Activated CD4-positive, alpha-beta memory T cell treated with anti-CD3 and anti-CD28 coated beads, Interleukin-2, amount 10 ng/mL, durations not matched to agents 7 days and 5 days (primary cell): ENCODE measurements at regions of chr12 and their contacts with region 1.

Region 1: DNA sequence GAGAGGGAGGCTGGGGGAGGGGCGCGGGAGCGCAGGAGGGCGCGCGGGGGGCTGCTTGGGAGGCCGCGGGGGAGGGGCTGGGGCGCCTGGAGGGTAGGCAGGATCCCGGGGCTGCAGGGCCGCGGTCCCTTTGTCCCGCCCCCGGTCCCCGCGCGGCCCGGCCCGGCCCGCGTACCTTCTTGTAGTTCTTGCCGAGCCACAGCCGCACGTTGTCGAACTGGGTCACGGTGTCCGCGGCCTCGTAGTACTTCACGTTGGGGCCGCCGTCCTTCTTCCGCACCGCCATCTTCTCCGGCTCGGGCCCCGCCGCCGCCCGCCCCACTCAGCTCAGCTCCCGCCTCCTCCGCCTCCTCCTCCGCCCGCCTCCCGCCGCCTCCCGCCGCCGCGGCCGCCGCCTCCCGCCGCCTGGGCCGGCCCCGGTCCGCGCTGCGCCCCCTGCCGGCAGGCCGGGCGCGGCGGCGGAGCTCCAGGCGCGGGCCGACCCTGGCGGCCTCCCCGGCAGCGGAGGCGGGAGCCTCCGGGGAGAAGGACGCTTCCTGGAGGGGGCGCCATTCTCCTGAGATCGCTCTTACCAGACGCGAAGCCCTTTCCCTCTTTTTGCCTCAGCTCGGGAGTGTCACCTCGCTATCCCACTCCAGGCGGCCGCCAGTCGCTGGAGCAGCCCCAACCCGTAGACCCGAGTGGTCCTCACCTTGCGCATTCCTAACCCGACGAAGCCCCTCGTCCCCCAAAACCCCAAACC is at the start of gene SMARCC2:
- DNase-seq: peak; percentile 85
- H3K4me3 Mint-ChIP-seq: peak within 1 kb of the TSS; percentile 97
- H3K27ac Mint-ChIP-seq: peak within 1 kb of the TSS; percentile 94
- H3K4me1 Mint-ChIP-seq: peaks cover 53% of the 10 kb centered on the region
- H3K27me3 Mint-ChIP-seq: no peaks in the 10 kb centered on the region
- total RNA-seq, gene SMARCC2: 133 to 137 TPM

Region 2: GRCh38 chr12:55806982-55807381 is 382.4 kb before region 1 on chr12:
- CTCF ChIA-PET with region 1: no interaction called
- POLR2A ChIA-PET with region 1: no interaction called
- DNase-seq: no peak
- H3K4me3 Mint-ChIP-seq: no peak overlapping the region
- H3K27ac Mint-ChIP-seq: no peak overlapping the region
- H3K4me1 Mint-ChIP-seq: peaks cover 14% of the 10 kb centered on the region
- H3K27me3 Mint-ChIP-seq: no peaks in the 10 kb centered on the region

Region 3: GRCh38 chr12:56104109-56104814 is 85.1 kb before region 1 on chr12 and contains the start of gene PA2G4:
- CTCF ChIA-PET with region 1: interaction called, 9 read pairs
- POLR2A ChIA-PET with region 1: interaction called, 25 read pairs
- DNase-seq: peak; percentile 99
- H3K4me3 Mint-ChIP-seq: peak within 1 kb of the TSS; percentile 99
- H3K27ac Mint-ChIP-seq: peak within 1 kb of the TSS; percentile 98
- H3K4me1 Mint-ChIP-seq: peaks cover 53% of the 10 kb centered on the region
- H3K27me3 Mint-ChIP-seq: no peaks in the 10 kb centered on the region
- total RNA-seq, gene PA2G4: 242 to 243 TPM

Region 4: GRCh38 chr12:56137853-56138571 is 51.3 kb before region 1 on chr12:
- CTCF ChIA-PET with region 1: interaction called, 5 read pairs
- POLR2A ChIA-PET with region 1: interaction called, 11 read pairs
- DNase-seq: no peak
- H3K4me3 Mint-ChIP-seq: no peak overlapping the region
- H3K27ac Mint-ChIP-seq: peak overlapping the region; percentile 78
- H3K4me1 Mint-ChIP-seq: peaks cover 73% of the 10 kb centered on the region
- H3K27me3 Mint-ChIP-seq: no peaks in the 10 kb centered on the region

Region 5: DNA sequence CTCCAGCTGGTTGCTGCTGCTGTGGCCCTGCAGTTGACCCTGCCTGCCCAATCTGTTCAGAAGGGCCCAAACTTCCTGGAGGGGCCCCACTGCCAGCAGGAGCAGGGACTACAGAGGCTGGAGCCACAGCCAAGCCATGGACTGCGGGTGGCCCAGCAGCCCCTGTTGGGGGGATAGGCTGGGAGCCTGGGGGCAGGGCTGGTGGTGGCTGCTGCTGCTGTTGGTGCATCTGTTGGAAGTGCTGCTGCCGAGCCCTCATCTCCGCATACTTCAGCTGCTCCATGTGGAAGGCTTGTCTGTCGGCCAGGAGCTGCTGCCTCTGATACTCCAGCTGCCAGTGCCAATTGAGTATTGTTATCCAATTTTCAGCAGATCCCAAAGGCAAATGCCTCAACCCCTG is 24.0 kb before region 1 on chr12:
- CTCF ChIA-PET with region 1: interaction called, 37 read pairs
- POLR2A ChIA-PET with region 1: interaction called, 95 read pairs
- DNase-seq: no peak
- H3K4me3 Mint-ChIP-seq: no peak overlapping the region
- H3K27ac Mint-ChIP-seq: no peak overlapping the region
- H3K4me1 Mint-ChIP-seq: peaks cover 35% of the 10 kb centered on the region
- H3K27me3 Mint-ChIP-seq: no peaks in the 10 kb centered on the region

Region 6: DNA sequence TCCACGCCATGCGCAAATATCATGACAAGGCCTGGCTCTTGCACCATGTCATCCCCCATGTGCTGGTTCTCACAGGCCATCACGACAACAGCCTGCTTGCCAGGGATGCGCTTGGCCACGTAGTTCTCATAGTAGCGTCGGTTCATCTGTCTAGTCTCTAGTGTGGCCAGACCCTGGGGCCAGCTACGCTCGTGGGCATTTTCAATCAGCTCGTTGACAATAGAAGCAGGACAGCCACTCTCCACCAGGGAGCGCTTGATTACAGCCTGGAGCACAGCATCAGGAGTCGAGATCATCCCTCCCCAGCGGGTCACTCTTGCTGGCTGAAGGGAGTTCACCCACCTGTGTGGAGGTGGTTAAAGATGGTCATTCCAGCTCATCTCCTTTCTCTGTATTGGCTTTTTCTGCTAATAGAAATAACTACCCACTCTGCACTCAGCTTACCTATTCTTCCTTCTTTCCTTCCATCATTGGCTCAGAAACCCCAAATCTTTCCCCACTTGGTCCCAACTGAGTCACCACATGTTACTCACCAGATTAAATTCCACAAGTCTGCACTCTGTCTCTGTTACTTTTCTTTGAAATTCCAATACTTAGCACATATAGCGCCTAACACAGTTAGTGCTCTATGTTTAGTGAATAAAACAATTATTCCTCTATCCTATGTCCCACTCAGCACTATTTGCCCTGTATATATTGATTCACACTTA is 17.3 kb after region 1 on chr12:
- CTCF ChIA-PET with region 1: interaction called, 29 read pairs
- POLR2A ChIA-PET with region 1: interaction called, 4 read pairs
- DNase-seq: peak; percentile 52
- H3K4me3 Mint-ChIP-seq: no peak overlapping the region
- H3K27ac Mint-ChIP-seq: no peak overlapping the region
- H3K4me1 Mint-ChIP-seq: no peaks in the 10 kb centered on the region
- H3K27me3 Mint-ChIP-seq: no peaks in the 10 kb centered on the region

Region 7: DNA sequence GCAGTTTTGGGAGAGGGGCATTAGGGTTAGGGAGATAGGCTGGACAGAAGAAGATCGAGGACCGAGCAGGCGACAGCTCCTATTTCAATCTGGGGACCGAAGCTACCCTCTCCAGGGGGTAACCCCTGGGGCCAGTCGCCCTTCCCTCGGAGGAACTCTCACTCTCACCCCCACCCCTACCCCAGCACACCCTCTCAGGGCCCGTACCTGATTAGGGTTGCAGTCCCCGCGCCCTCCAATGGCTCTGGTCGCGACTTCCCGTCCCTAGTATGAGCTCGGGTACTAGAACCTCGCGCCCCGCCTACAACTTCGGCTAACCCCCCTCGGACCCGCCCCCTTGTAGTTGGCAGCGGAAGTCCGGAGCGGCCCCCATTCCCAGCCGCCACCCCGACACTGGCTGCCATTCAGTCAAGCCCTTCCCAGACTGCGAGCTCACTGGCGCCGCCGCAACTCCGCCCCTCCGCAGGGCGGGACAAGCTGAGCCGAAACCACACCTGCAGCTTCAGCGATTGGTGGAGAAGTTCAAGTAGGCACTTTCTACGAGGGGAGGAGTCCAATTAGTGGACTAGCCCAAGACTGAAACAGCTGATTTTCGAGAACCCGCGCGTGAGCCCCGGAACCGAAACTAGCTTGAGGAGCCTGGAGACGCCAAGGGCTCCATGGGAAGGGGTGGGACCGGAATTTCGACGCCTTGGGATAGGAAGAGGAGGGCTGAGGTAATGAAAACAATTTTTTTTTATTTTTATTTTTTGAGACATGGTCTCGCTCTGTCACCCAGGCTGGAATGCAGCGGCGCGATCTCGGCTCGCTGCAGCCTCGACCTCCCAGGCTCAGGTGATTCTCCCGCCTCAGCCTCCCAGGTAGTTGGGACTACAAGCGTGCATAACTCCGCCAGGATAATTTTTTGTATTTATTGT is 170.8 kb after region 1 on chr12 and contains the start of gene STAT2:
- CTCF ChIA-PET with region 1: interaction called, 26 read pairs
- POLR2A ChIA-PET with region 1: interaction called, 10 read pairs
- DNase-seq: peak; percentile 100
- H3K4me3 Mint-ChIP-seq: peak within 1 kb of the TSS; percentile 93
- H3K27ac Mint-ChIP-seq: peak within 1 kb of the TSS; percentile 90
- H3K4me1 Mint-ChIP-seq: peaks cover 28% of the 10 kb centered on the region
- H3K27me3 Mint-ChIP-seq: no peaks in the 10 kb centered on the region
- total RNA-seq, gene STAT2: 298 to 304 TPM